Activated CD4-positive, alpha-beta memory T cell treated with anti-CD3 and anti-CD28 coated beads for 36 hours (primary cell): ENCODE measurements at regions of chr5 and their contacts with region 1.

Region 1: GRCh38 chr5:88236866-88237642 is 31.6 kb downstream of the TMEM161B start:
- DNase-seq: peak; percentile 14
- H3K4me3 Mint-ChIP-seq: no peak overlapping the region
- H3K27ac Mint-ChIP-seq: peak overlapping the region; percentile 59
- H3K4me1 Mint-ChIP-seq: peaks cover 14% of the 10 kb centered on the region
- H3K27me3 Mint-ChIP-seq: no peaks in the 10 kb centered on the region

Region 2: GRCh38 chr5:87924451-87925126 is 312.5 kb before region 1 on chr5:
- CTCF ChIA-PET with region 1: no interaction called
- POLR2A ChIA-PET with region 1: no interaction called
- intact Hi-C with region 1: no loop called
- DNase-seq: no peak
- H3K4me3 Mint-ChIP-seq: no peak overlapping the region
- H3K27ac Mint-ChIP-seq: no peak overlapping the region
- H3K4me1 Mint-ChIP-seq: no peaks in the 10 kb centered on the region
- H3K27me3 Mint-ChIP-seq: peaks cover 1% of the 10 kb centered on the region

Region 3: GRCh38 chr5:88203981-88204750 is 32.9 kb before region 1 on chr5:
- CTCF ChIA-PET with region 1: no interaction called
- POLR2A ChIA-PET with region 1: interaction called, 6 read pairs
- intact Hi-C with region 1: loop called (anchors 1 kb)
- DNase-seq: peak; percentile 68
- H3K4me3 Mint-ChIP-seq: peak overlapping the region; percentile 9
- H3K27ac Mint-ChIP-seq: peak overlapping the region; percentile 76
- H3K4me1 Mint-ChIP-seq: peaks cover 15% of the 10 kb centered on the region
- H3K27me3 Mint-ChIP-seq: no peaks in the 10 kb centered on the region

Region 4: GRCh38 chr5:88251048-88251711 is 14.1 kb after region 1 on chr5:
- CTCF ChIA-PET with region 1: no interaction called
- POLR2A ChIA-PET with region 1: no interaction called
- intact Hi-C with region 1: loop called (anchors 1 kb)
- DNase-seq: peak; percentile 43
- H3K4me3 Mint-ChIP-seq: no peak overlapping the region
- H3K27ac Mint-ChIP-seq: peak overlapping the region; percentile 73
- H3K4me1 Mint-ChIP-seq: peaks cover 62% of the 10 kb centered on the region
- H3K27me3 Mint-ChIP-seq: no peaks in the 10 kb centered on the region

Region 5: GRCh38 chr5:88262116-88262515 is 25.1 kb after region 1 on chr5:
- CTCF ChIA-PET with region 1: no interaction called
- POLR2A ChIA-PET with region 1: no interaction called
- intact Hi-C with region 1: loop called (anchors 2 kb)
- DNase-seq: no peak
- H3K4me3 Mint-ChIP-seq: no peak overlapping the region
- H3K27ac Mint-ChIP-seq: no peak overlapping the region
- H3K4me1 Mint-ChIP-seq: peaks cover 46% of the 10 kb centered on the region
- H3K27me3 Mint-ChIP-seq: no peaks in the 10 kb centered on the region